PC-9 (cell line): ENCODE measurements at regions of chr7 and their contacts with region 1.

Region 1: GRCh38 chr7:7911371-7912155 is 57.0 kb upstream of the GLCCI1 start:
- DNase-seq: peak; percentile 80 to 99
- H3K4me3 ChIP-seq: no peak overlapping the region
- H3K27ac ChIP-seq: peak overlapping the region; percentile 90
- H3K4me1 ChIP-seq: peaks cover 51% of the 10 kb centered on the region
- H3K27me3 ChIP-seq: no peaks in the 10 kb centered on the region
- CTCF ChIP-seq: no peak

Region 2: GRCh38 chr7:7176421-7177043 is 735.0 kb before region 1 on chr7:
- CTCF ChIA-PET with region 1: no interaction called
- POLR2A ChIA-PET with region 1: no interaction called
- intact Hi-C with region 1: loop called (anchors 2 kb)
- DNase-seq: peak; percentile 24 to 83
- H3K4me3 ChIP-seq: peak overlapping the region; percentile 3; the same call in 1 of the 2 replicates
- H3K27ac ChIP-seq: peak overlapping the region; percentile 87
- H3K4me1 ChIP-seq: peaks cover 47% of the 10 kb centered on the region
- H3K27me3 ChIP-seq: no peaks in the 10 kb centered on the region
- CTCF ChIP-seq: no peak

Region 3: DNA sequence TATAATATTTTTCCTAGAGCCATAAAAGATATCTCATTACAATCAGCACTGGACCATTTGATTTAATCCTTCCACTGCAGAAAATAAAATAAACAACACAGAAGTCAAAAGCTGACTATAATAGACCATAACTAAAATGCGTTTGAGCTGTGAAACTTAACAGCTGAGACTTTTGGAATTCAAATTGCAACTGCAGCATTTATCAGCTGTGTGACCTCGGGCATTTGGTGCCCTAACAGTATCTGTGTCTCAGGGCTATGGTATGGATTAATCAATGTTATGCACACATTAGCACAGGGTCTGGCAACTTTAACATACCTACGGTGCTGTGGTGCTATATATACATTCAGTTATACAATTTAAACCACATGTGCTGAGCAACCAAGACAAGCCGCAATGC is 536.0 kb before region 1 on chr7:
- CTCF ChIA-PET with region 1: no interaction called
- POLR2A ChIA-PET with region 1: no interaction called
- intact Hi-C with region 1: no loop called
- DNase-seq: no peak
- H3K4me3 ChIP-seq: no peak overlapping the region
- H3K27ac ChIP-seq: no peak overlapping the region
- H3K4me1 ChIP-seq: no peaks in the 10 kb centered on the region
- H3K27me3 ChIP-seq: no peaks in the 10 kb centered on the region
- CTCF ChIP-seq: no peak

Region 4: GRCh38 chr7:7681179-7681935 is 230.2 kb before region 1 on chr7:
- CTCF ChIA-PET with region 1: interaction called, 6 read pairs
- POLR2A ChIA-PET with region 1: no interaction called
- intact Hi-C with region 1: loop called (anchors 1 kb)
- DNase-seq: peak; percentile 29 to 82
- H3K4me3 ChIP-seq: peak overlapping the region; percentile 11; the same call in 1 of the 2 replicates
- H3K27ac ChIP-seq: peak overlapping the region; percentile 38
- H3K4me1 ChIP-seq: peaks cover 28% of the 10 kb centered on the region
- H3K27me3 ChIP-seq: no peaks in the 10 kb centered on the region
- CTCF ChIP-seq: peak; percentile 84

Region 5: GRCh38 chr7:7861211-7861633 is 50.3 kb before region 1 on chr7:
- CTCF ChIA-PET with region 1: no interaction called
- POLR2A ChIA-PET with region 1: interaction called, 5 read pairs
- intact Hi-C with region 1: loop called (anchors 2 kb)
- DNase-seq: peak; percentile 35 to 93
- H3K4me3 ChIP-seq: no peak overlapping the region
- H3K27ac ChIP-seq: peak overlapping the region; percentile 43
- H3K4me1 ChIP-seq: peaks cover 37% of the 10 kb centered on the region
- H3K27me3 ChIP-seq: no peaks in the 10 kb centered on the region
- CTCF ChIP-seq: no peak

Region 6: GRCh38 chr7:7944619-7945282 is 33.2 kb after region 1 on chr7:
- CTCF ChIA-PET with region 1: no interaction called
- POLR2A ChIA-PET with region 1: no interaction called
- intact Hi-C with region 1: no loop called
- DNase-seq: no peak
- H3K4me3 ChIP-seq: no peak overlapping the region
- H3K27ac ChIP-seq: no peak overlapping the region
- H3K4me1 ChIP-seq: peaks cover 29% of the 10 kb centered on the region
- H3K27me3 ChIP-seq: no peaks in the 10 kb centered on the region
- CTCF ChIP-seq: no peak

Region 7: GRCh38 chr7:7996576-7996975 is 85.0 kb after region 1 on chr7:
- CTCF ChIA-PET with region 1: no interaction called
- POLR2A ChIA-PET with region 1: interaction called, 29 read pairs
- intact Hi-C with region 1: loop called (anchors 1 kb)
- DNase-seq: peak; percentile 63 to 97
- H3K4me3 ChIP-seq: peak overlapping the region; percentile 22; the same call in 1 of the 2 replicates
- H3K27ac ChIP-seq: peak overlapping the region; percentile 66
- H3K4me1 ChIP-seq: peaks cover 21% of the 10 kb centered on the region
- H3K27me3 ChIP-seq: no peaks in the 10 kb centered on the region
- CTCF ChIP-seq: no peak

Region 8: GRCh38 chr7:8418629-8419245 is 507.2 kb after region 1 on chr7:
- CTCF ChIA-PET with region 1: no interaction called
- POLR2A ChIA-PET with region 1: no interaction called
- intact Hi-C with region 1: no loop called
- DNase-seq: peak; percentile 44 to 62
- H3K4me3 ChIP-seq: no peak overlapping the region
- H3K27ac ChIP-seq: no peak overlapping the region
- H3K4me1 ChIP-seq: no peaks in the 10 kb centered on the region
- H3K27me3 ChIP-seq: peaks cover 8% of the 10 kb centered on the region; the same call in 1 of the 2 replicates
- CTCF ChIP-seq: peak; percentile 90

Region 9: GRCh38 chr7:8582728-8583127 is 671.2 kb after region 1 on chr7:
- CTCF ChIA-PET with region 1: no interaction called
- POLR2A ChIA-PET with region 1: no interaction called
- intact Hi-C with region 1: no loop called
- DNase-seq: no peak
- H3K4me3 ChIP-seq: no peak overlapping the region
- H3K27ac ChIP-seq: no peak overlapping the region
- H3K4me1 ChIP-seq: no peaks in the 10 kb centered on the region
- H3K27me3 ChIP-seq: no peaks in the 10 kb centered on the region
- CTCF ChIP-seq: no peak